ENCODE measurements at regions of chr1 and their contacts with region 1.

Region 1: DNA sequence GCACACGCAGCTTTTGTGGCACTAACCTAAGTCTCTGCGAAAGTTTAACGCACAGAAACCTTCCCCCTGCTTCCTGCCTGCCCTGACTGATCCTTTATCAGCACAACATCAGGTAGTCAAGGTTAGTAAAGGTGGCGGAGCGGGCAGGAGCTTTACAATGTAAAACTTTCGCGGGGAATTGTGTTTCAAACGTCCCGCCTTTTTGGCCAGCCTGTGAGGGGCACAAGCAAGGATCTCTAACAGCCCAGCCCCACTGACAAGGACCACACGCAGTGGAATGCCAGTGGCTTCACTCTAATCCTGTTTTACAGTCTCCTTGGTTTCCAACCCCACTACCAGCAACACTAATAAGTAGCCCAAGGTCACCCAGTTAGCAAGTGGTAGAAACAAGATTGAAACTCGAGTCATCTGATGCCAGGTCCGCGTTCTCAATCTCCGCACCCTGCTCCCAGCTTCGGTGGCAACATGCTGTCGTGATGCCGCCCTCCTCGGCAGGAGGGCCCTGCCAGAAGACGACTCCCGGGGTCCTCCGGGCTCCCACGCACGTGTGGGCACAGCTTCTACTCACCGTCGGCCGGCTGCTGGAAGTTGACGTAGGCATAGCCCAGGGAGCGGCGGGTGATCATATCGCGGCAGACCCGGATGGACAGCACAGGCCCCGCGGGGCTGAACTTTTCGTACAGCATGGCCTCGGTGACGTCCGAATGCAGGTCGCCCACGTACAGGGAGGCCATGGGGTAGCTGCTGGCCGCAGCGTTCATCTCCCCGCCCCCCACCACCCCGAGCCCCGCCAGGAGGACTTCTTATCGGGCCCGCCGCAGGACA is 1.2 kb downstream of the PABPC4 start:
- DNase-seq: peak; percentile 66
- H3K4me3 Mint-ChIP-seq: peak overlapping the region; percentile 90
- H3K27ac Mint-ChIP-seq: peak overlapping the region; percentile 88
- H3K4me1 Mint-ChIP-seq: peaks cover 45% of the 10 kb centered on the region
- H3K27me3 Mint-ChIP-seq: no peaks in the 10 kb centered on the region

Region 2: GRCh38 chr1:39691262-39692151 is 116.1 kb after region 1 on chr1 and contains the start of gene HPCAL4:
- CTCF ChIA-PET with region 1: interaction called, 10 read pairs
- POLR2A ChIA-PET with region 1: interaction called, 6 read pairs
- DNase-seq: peak; percentile 91
- H3K4me3 Mint-ChIP-seq: peak within 1 kb of the TSS; percentile 74
- H3K27ac Mint-ChIP-seq: no peak within 1 kb of the TSS
- H3K4me1 Mint-ChIP-seq: peaks cover 28% of the 10 kb centered on the region
- H3K27me3 Mint-ChIP-seq: peaks cover 46% of the 10 kb centered on the region
- total RNA-seq, gene HPCAL4: 2.4 to 2.6 TPM

Measured in activated CD4-positive, alpha-beta memory T cell treated with anti-CD3 and anti-CD28 coated beads, Interleukin-2, amount 10 ng/mL, durations not matched to agents 7 days and 5 days (primary cell).